CD8-positive, alpha-beta T cell (primary cell): ENCODE measurements at regions of chr5 and their contacts with region 1.

Region 1: GRCh38 chr5:150801117-150801927 is 22.8 kb downstream of the SMIM3 start:
- DNase-seq: peak in 2 of 9 experiments; percentile 62 to 71
- ATAC-seq: peak; percentile 54
- H3K4me3 ChIP-seq: no peak overlapping the region
- H3K4me3 Mint-ChIP-seq: no peak overlapping the region
- H3K27ac ChIP-seq: no peak overlapping the region
- H3K27ac Mint-ChIP-seq: no peak overlapping the region
- H3K4me1 ChIP-seq: peaks cover 5% of the 10 kb centered on the region
- H3K4me1 Mint-ChIP-seq: peaks cover 4% of the 10 kb centered on the region
- H3K27me3 ChIP-seq: no peaks in the 10 kb centered on the region
- H3K27me3 Mint-ChIP-seq: peaks cover 4% of the 10 kb centered on the region
- CTCF ChIP-seq: peak; percentile 78

Region 2: GRCh38 chr5:150789943-150790611 is 11.2 kb before region 1 on chr5:
- CTCF ChIA-PET with region 1: interaction called, 31 read pairs
- POLR2A ChIA-PET with region 1: no interaction called
- intact Hi-C with region 1: no loop called
- DNase-seq: peak in 8 of 9 experiments; percentile 35 to 79 (median 65)
- ATAC-seq: peak; percentile 95
- H3K4me3 ChIP-seq: peak overlapping the region in 1 of 2 experiments; percentile 24
- H3K4me3 Mint-ChIP-seq: peak overlapping the region; percentile 57
- H3K27ac ChIP-seq: peak overlapping the region in 1 of 2 experiments; percentile 50
- H3K27ac Mint-ChIP-seq: peak overlapping the region; percentile 52
- H3K4me1 ChIP-seq: peaks cover 14% of the 10 kb centered on the region
- H3K4me1 Mint-ChIP-seq: peaks cover 43% of the 10 kb centered on the region
- H3K27me3 ChIP-seq: no peaks in the 10 kb centered on the region
- H3K27me3 Mint-ChIP-seq: no peaks in the 10 kb centered on the region
- CTCF ChIP-seq: no peak

Region 3: DNA sequence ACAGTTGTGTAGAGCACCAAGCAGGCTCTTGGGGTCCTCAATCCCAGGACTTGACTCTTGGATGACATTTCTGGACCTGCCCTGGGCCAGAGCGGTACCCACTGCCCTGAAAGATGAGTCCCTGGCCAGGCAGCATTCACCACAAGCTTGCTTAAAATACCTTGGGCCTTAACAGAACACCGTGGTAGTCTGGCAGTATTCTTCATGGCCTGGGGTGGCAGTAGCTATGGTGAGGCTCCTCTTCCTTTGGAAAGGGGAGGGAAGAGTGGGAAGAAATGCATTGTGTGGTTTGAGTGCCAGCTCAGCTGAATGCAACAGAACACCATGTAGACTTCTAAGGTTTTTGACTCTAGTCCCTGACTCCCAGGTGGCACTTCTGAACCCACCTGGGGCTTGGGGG is 15.6 kb after region 1 on chr5:
- CTCF ChIA-PET with region 1: interaction called, 12 read pairs
- POLR2A ChIA-PET with region 1: no interaction called
- intact Hi-C with region 1: no loop called
- DNase-seq: no peak
- ATAC-seq: no peak
- H3K4me3 ChIP-seq: no peak overlapping the region
- H3K4me3 Mint-ChIP-seq: no peak overlapping the region
- H3K27ac ChIP-seq: no peak overlapping the region
- H3K27ac Mint-ChIP-seq: no peak overlapping the region
- H3K4me1 ChIP-seq: no peaks in the 10 kb centered on the region
- H3K4me1 Mint-ChIP-seq: no peaks in the 10 kb centered on the region
- H3K27me3 ChIP-seq: no peaks in the 10 kb centered on the region
- H3K27me3 Mint-ChIP-seq: peaks cover 16% of the 10 kb centered on the region
- CTCF ChIP-seq: no peak

Region 4: GRCh38 chr5:150853561-150853960 is 52.2 kb after region 1 on chr5:
- CTCF ChIA-PET with region 1: interaction called, 86 read pairs
- POLR2A ChIA-PET with region 1: no interaction called
- intact Hi-C with region 1: no loop called
- DNase-seq: no peak
- ATAC-seq: no peak
- H3K4me3 ChIP-seq: no peak overlapping the region
- H3K4me3 Mint-ChIP-seq: peak overlapping the region; percentile 55
- H3K27ac ChIP-seq: no peak overlapping the region
- H3K27ac Mint-ChIP-seq: no peak overlapping the region
- H3K4me1 ChIP-seq: no peaks in the 10 kb centered on the region
- H3K4me1 Mint-ChIP-seq: peaks cover 5% of the 10 kb centered on the region
- H3K27me3 ChIP-seq: no peaks in the 10 kb centered on the region
- H3K27me3 Mint-ChIP-seq: no peaks in the 10 kb centered on the region
- CTCF ChIP-seq: no peak